ENCODE measurements at regions of chr12 and their contacts with region 1.

Region 1: DNA sequence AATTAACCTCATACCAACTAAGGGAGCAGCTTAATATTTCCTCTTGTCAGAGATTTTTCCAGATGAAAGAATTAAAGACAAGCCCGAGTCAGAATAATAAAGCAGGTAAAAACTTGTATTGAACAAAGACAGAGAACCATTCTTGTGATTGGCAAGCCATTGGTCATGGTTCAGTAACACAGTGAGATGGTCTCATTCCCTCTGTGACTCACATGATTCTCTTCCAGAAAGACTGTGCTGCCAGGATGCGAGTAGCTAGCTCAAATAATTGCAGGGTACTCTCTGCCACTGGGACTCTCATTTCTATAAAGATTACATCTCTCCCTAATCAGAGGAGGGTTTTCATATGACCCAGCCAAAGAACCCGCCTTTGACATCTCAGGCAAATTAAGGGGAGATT is 179.4 kb downstream of the PHLDA1 start:
- DNase-seq: no peak
- H3K4me3 ChIP-seq: no peak overlapping the region
- H3K27ac ChIP-seq: no peak overlapping the region
- H3K4me1 ChIP-seq: no peaks in the 10 kb centered on the region
- H3K27me3 ChIP-seq: no peaks in the 10 kb centered on the region
- CTCF ChIP-seq: no peak
- POLR2A ChIP-seq: no peak

Region 2: GRCh38 chr12:75913502-75914351 is 61.6 kb after region 1 on chr12:
- intact Hi-C with region 1: loop called (anchors 2 kb)
- DNase-seq: no peak
- H3K4me3 ChIP-seq: no peak overlapping the region
- H3K27ac ChIP-seq: no peak overlapping the region
- H3K4me1 ChIP-seq: peaks cover 0 to 5% of the 10 kb centered on the region in 2 donors
- H3K27me3 ChIP-seq: no peaks in the 10 kb centered on the region
- CTCF ChIP-seq: no peak
- POLR2A ChIP-seq: no peak

Measured in breast epithelium (tissue), 4 donors.